B cell (primary cell): ENCODE measurements at regions of chr10 and their contacts with region 1.

Region 1: DNA sequence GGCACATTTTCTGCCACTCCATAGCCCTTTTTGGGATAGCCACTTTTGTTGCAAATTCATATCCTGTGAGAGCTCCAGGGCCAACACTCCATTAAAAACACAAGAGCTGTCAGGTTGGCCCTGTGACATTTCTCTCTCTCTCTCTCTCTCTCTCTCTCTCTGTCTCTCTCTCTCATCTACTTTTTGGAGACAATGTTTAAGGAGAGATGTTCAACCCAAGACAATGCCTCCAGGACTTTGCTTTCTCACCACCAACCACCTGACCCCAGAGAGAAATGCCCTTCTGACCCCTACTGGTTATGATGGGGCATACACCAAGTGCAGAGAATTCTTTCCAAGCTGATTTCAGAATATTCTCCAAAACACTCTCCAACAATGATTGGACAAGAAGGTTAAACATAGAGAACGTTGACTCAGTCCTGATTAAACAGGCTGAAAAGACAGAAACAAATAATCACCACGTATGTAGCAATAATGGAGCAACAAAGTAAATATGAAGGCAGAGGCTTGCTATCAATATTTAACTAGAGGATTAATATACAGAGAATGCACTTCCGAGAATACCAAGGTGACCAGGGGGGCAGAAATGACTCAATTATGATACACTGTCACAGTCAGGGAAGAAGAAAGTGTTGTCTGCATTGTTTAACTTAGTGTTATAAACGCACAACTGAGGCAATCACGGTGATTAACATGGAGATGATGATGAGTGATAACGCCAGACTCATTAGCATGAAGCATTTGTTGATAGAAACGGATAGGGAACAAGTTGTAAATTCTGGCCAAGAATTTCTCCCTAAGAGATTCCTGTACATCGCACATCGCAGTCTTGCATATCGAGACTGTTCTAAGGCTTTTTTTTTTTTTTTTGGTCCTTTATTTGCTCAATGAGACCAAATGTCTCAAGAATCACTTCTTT is 178.5 kb downstream of the NRP1 start:
- DNase-seq: peak; percentile 61
- ATAC-seq: peak; percentile 65
- H3K4me3 ChIP-seq: no peak overlapping the region
- H3K4me3 Mint-ChIP-seq: no peak overlapping the region
- H3K27ac ChIP-seq: no peak overlapping the region
- H3K27ac Mint-ChIP-seq: peak overlapping the region; percentile 5
- H3K4me1 ChIP-seq: peaks cover 10 to 43% of the 10 kb centered on the region in 2 donors
- H3K4me1 Mint-ChIP-seq: peaks cover 32% of the 10 kb centered on the region
- H3K27me3 ChIP-seq: no peaks in the 10 kb centered on the region
- H3K27me3 Mint-ChIP-seq: peaks cover 4% of the 10 kb centered on the region
- CTCF ChIP-seq: peak; percentile 69

Region 2: DNA sequence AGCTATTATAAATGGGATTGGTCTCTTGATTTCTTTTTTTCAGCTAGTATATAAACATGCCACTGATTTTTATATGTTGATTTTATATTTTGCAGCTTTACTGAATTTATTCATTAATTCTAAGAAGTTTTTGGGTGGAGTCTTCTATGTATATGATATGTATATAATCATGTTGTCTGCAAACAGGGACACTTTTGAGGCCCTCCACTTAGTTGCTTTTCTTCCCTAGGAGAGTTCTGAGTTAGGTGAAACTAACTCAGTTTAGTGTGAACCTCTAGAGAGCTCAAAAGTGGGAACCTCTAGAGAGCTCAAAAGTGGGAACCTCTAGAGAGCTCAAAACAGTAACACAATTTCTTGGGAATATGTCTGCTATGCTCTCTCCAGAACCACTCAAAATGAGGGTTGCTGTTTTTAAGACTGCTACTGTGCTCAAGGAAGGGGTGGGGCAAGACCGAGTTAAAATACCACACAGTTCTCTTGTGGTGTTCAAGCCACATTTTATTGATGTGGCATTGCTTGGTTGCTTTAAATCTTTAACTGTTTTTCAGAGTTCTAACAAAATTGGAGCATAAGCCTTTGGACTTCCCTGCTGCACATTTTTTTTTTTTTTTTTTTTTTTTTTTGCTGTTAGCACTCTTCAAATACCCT is 696.8 kb before region 1 on chr10:
- CTCF ChIA-PET with region 1: no interaction called
- POLR2A ChIA-PET with region 1: interaction called, 11 read pairs
- intact Hi-C with region 1: no loop called
- DNase-seq: no peak
- ATAC-seq: no peak
- H3K4me3 ChIP-seq: no peak overlapping the region
- H3K4me3 Mint-ChIP-seq: no peak overlapping the region
- H3K27ac ChIP-seq: no peak overlapping the region
- H3K27ac Mint-ChIP-seq: no peak overlapping the region
- H3K4me1 ChIP-seq: no peaks in the 10 kb centered on the region
- H3K4me1 Mint-ChIP-seq: no peaks in the 10 kb centered on the region
- H3K27me3 ChIP-seq: no peaks in the 10 kb centered on the region
- H3K27me3 Mint-ChIP-seq: no peaks in the 10 kb centered on the region
- CTCF ChIP-seq: no peak

Region 3: GRCh38 chr10:32938554-32939061 is 217.4 kb before region 1 on chr10:
- CTCF ChIA-PET with region 1: no interaction called
- POLR2A ChIA-PET with region 1: no interaction called
- intact Hi-C with region 1: loop called (anchors 10 kb)
- DNase-seq: no peak
- ATAC-seq: no peak
- H3K4me3 ChIP-seq: no peak overlapping the region
- H3K4me3 Mint-ChIP-seq: peak overlapping the region; percentile 33
- H3K27ac ChIP-seq: peak overlapping the region in 1 of 2 donors; percentile 4
- H3K27ac Mint-ChIP-seq: peak overlapping the region; percentile 67
- H3K4me1 ChIP-seq: peaks cover 33 to 37% of the 10 kb centered on the region in 2 donors
- H3K4me1 Mint-ChIP-seq: peaks cover 53% of the 10 kb centered on the region
- H3K27me3 ChIP-seq: no peaks in the 10 kb centered on the region
- H3K27me3 Mint-ChIP-seq: no peaks in the 10 kb centered on the region
- CTCF ChIP-seq: no peak

Region 4: DNA sequence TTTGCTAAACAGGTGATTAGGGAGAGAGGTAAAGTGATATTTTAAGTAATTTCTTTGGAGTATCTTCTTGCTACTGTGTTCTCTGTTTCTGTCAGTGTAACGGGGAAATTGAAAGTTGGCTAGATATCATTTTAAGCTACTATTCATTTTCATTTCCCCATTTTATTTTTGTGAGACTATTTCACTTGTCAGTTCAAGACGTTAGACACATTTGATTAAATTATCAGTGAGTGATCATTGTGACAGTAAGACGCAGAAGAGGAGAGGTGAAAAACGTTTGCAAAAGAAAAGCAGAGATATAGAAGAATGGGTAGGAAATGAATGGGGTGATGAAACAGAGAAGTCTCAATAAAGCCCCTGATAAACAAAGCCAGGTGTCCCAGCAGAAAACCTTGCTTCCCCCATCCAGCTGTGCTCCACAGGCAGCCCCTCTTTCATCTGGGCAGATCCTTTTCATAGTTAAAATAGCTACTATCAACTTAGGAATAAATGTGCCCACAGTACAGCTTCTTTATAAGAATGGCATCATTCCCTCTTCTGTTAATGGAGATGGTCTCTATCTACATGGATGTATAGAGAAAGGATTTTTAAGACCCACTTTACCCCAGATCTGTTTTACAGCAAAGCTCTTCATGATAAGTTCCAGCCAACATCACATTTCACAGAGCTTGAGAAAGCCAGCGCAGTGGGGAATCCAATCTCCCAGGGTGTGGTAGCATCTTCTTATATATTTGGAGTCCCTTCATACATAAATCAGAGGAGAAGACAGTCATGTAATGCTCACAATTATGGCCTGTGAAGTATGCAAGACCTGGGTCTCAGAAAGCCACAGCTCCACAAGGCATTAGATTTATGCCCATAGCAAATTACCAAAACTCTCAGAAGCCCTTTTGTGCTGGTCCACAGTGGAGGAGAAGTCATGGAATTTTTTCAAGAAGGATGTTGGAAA is 59.8 kb before region 1 on chr10:
- CTCF ChIA-PET with region 1: interaction called, 3 read pairs
- POLR2A ChIA-PET with region 1: no interaction called
- intact Hi-C with region 1: loop called (anchors 10 kb)
- DNase-seq: peak; percentile 57
- ATAC-seq: peak; percentile 56
- H3K4me3 ChIP-seq: peak overlapping the region in 2 of 5 experiments; percentile 21 to 30
- H3K4me3 Mint-ChIP-seq: peak overlapping the region; percentile 70
- H3K27ac ChIP-seq: peak overlapping the region; percentile 59 to 65
- H3K27ac Mint-ChIP-seq: peak overlapping the region; percentile 81
- H3K4me1 ChIP-seq: peaks cover 44 to 54% of the 10 kb centered on the region in 2 donors
- H3K4me1 Mint-ChIP-seq: peaks cover 65% of the 10 kb centered on the region
- H3K27me3 ChIP-seq: no peaks in the 10 kb centered on the region
- H3K27me3 Mint-ChIP-seq: no peaks in the 10 kb centered on the region
- CTCF ChIP-seq: no peak

Region 5: DNA sequence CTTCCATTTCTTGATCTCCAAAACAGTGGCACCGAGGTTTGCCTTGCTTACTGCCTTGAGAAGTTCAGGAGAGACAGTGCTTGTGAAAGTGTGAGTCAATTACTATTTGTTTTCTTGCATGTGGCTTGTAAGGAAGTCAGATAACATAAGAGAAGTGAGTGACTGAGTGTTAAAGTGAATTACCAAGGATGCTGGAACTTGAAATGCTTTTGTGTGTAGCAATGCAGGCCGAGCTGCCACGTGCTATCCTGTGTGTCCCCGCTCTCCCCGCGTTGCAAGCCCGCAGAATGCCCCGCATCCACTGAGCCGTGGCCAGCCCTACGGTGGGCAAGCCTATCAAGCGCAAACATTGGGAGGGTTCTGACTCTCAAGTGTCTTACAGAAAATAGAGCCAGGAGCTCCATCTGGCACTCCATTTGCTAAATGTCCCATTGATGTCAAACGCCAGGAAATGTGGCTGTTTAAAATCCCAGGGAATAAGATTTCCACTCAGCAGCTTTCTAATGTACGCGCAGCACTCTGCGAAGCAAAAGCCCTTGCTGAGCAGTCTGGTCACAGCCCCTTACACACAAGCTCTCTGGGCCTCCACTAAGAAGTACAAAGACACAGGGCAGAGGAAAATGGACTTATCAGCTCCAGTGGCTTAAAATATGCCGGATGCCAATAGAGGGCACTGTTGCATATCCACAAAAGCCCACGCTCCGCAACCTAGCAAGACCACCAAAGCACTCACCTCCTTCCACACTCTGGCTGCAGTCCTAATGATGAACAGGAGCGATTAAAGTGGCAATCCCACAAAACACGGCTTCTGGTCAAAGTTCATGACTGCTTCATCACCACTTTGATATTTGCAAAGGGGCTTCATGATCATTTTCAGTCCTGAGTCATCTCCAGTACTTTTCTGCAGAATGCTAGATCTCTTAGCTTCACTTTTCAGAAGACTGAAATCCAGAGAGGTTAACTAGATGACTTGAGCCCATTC is 40.0 kb before region 1 on chr10:
- CTCF ChIA-PET with region 1: interaction called, 6 read pairs
- POLR2A ChIA-PET with region 1: interaction called, 3 read pairs
- intact Hi-C with region 1: loop called (anchors 5 kb)
- DNase-seq: no peak
- ATAC-seq: no peak
- H3K4me3 ChIP-seq: no peak overlapping the region
- H3K4me3 Mint-ChIP-seq: no peak overlapping the region
- H3K27ac ChIP-seq: peak overlapping the region; percentile 39 to 54
- H3K27ac Mint-ChIP-seq: peak overlapping the region; percentile 92
- H3K4me1 ChIP-seq: peaks cover 42 to 76% of the 10 kb centered on the region in 2 donors
- H3K4me1 Mint-ChIP-seq: peaks cover 78% of the 10 kb centered on the region
- H3K27me3 ChIP-seq: no peaks in the 10 kb centered on the region
- H3K27me3 Mint-ChIP-seq: no peaks in the 10 kb centered on the region
- CTCF ChIP-seq: no peak

Region 6: GRCh38 chr10:33183658-33184057 is 27.7 kb after region 1 on chr10:
- CTCF ChIA-PET with region 1: no interaction called
- POLR2A ChIA-PET with region 1: no interaction called
- intact Hi-C with region 1: no loop called
- DNase-seq: no peak
- ATAC-seq: no peak
- H3K4me3 ChIP-seq: no peak overlapping the region
- H3K4me3 Mint-ChIP-seq: no peak overlapping the region
- H3K27ac ChIP-seq: no peak overlapping the region
- H3K27ac Mint-ChIP-seq: no peak overlapping the region
- H3K4me1 ChIP-seq: no peaks in the 10 kb centered on the region
- H3K4me1 Mint-ChIP-seq: no peaks in the 10 kb centered on the region
- H3K27me3 ChIP-seq: no peaks in the 10 kb centered on the region
- H3K27me3 Mint-ChIP-seq: peaks cover 17% of the 10 kb centered on the region
- CTCF ChIP-seq: no peak